ENCODE measurements at regions of chr2 and their contacts with region 1.

Region 1: GRCh38 chr2:112433932-112434730 is 686 bp upstream of the RGPD8 start:
- DNase-seq: no peak
- H3K4me3 ChIP-seq: no peak overlapping the region
- H3K27ac ChIP-seq: no peak overlapping the region
- H3K4me1 ChIP-seq: peaks cover 0 to 16% (median 11%) of the 10 kb centered on the region in 4 donors
- H3K27me3 ChIP-seq: peaks cover 0 to 22% (median 0%) of the 10 kb centered on the region in 3 donors
- CTCF ChIP-seq: no peak
- EP300 ChIP-seq: no peak
- POLR2A ChIP-seq: no peak

Region 2: DNA sequence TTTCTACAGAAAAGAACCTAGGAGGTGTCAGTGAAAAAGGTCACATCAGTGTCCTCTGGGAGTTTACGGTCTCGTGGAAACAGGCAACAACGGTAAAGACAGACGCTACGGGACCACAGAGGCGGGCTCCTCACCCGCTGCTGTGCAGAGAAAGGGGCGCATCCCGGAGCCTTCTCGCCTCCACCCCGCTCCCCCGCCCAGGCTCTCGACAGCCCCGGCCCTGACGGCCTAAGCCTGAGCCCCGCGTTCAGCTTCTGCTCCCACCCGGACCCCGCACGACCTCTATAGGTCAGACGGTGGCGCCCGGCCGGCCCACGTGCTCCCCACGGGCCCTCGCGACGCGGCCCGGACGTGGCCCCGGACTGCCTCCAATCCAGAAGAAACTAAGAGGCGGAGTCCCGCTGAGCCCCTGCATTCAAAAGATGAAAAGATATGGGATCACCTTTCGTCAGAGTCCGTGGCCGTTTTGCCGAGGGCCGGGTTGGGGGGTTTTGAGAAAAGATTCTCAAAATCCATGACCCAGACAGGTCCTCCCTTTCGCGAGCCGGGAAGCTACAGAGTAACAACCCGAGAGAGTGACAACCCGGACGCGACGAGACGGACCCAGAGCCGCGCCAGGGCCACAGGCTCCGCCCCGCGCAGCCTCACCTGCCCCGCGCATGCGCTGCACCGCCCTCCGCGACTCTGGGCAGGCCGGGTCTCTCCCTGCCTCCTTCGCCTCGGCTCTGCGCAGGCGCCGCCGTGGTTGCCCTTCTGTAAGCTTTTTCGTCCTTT is 179.5 kb before region 1 on chr2 and contains the start of gene ZC3H8:
- intact Hi-C with region 1: loop called (anchors 5 kb)
- DNase-seq: peak; percentile 96 to 98
- H3K4me3 ChIP-seq: peak within 1 kb of the TSS; percentile 60 to 79 (median 67)
- H3K27ac ChIP-seq: peak within 1 kb of the TSS; percentile 75 to 88 (median 83)
- H3K4me1 ChIP-seq: peaks cover 0 to 47% (median 16%) of the 10 kb centered on the region in 4 donors
- H3K27me3 ChIP-seq: no peaks in the 10 kb centered on the region
- CTCF ChIP-seq: no peak
- EP300 ChIP-seq: no peak
- POLR2A ChIP-seq: peak in 1 of 4 donors; percentile 69
- total RNA-seq, gene ZC3H8: 7.8 to 117 (median 10.5) TPM

Region 3: GRCh38 chr2:112529757-112530156 is 95.6 kb after region 1 on chr2:
- intact Hi-C with region 1: no loop called
- DNase-seq: no peak
- H3K4me3 ChIP-seq: no peak overlapping the region
- H3K27ac ChIP-seq: no peak overlapping the region
- H3K4me1 ChIP-seq: no peaks in the 10 kb centered on the region
- H3K27me3 ChIP-seq: no peaks in the 10 kb centered on the region
- CTCF ChIP-seq: no peak
- EP300 ChIP-seq: no peak
- POLR2A ChIP-seq: no peak

Region 4: DNA sequence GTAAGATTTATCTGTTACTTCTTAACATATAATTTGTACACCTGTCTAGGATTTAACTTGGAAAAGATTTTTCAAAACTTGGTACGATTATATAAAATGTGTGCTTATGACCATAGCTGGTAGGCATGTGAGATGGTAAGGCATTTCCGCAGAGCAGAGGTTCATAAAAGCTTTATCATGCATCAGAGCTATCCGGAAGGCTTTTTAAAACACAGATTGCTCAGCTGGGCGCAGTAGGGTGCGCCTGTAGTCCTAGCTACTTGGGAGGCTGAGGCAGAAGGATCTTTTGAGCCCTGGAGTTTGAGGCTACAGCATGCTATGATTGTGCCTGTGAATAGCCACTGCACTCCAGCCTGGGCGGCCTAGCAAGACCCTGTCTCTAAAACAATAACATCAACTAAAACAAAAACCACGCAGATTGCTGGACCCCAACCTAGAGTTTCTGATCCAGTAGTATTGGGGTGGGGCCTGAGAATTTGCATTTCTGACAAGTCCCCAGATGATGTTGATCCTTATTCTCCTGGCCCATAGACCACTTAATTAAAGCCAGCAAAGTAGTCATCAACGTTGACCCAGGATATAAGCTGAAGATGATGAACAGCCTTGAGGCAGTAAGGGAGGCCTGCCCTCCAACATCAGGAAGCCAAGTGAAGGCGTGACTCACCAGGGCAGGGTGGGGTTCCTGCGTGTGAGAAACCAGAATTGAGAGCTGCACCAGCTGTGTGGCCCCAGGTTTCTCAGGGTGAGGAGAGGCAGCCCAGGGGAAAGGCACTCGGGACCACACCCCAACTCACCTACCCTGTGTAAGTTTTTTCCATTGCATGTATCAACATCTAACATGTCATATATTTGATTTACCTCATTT is 190.0 kb after region 1 on chr2:
- intact Hi-C with region 1: no loop called
- DNase-seq: peak; percentile 63 to 85
- H3K4me3 ChIP-seq: no peak overlapping the region
- H3K27ac ChIP-seq: peak overlapping the region in 1 of 5 donors; percentile 20
- H3K4me1 ChIP-seq: peaks cover 7 to 33% (median 14%) of the 10 kb centered on the region in 4 donors
- H3K27me3 ChIP-seq: no peaks in the 10 kb centered on the region
- CTCF ChIP-seq: no peak
- EP300 ChIP-seq: no peak
- POLR2A ChIP-seq: no peak

Measured in stomach (tissue), 19 donors.